Activated CD8-positive, alpha-beta T cell treated with anti-CD3 and anti-CD28 coated beads for 36 hours (primary cell): ENCODE measurements at regions of chr4 and their contacts with region 1.

Region 1: DNA sequence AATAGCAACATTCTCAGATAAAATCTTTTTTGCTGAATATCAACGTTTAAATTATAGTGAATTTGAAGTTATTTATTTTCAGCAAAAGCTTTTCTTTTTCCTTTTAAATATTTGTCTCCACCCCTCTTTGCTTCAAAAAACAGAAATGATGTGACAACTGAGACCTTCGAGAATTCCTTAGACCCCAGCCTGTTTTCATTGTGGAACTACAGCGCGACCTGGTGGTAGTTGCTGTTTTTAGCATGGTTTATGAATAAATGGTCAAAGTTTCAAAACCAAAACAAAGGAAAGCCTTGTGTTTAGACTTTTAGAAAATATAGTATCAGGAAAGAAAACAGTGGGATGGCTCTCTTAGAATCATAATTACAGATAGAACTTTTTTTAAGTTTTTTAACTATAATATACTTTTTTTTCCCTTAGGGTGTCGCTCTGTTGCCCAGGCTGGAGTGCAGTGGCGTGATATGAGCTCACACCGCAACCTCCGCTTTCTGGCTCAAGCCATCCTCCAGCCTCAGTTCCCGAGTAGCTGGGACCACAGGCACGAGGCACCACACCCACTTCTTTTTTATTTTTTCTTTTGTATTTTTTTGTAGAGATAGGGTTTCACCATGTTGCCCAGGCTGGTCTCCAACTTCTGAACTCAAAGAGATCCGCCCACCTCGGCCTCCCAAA is 26.8 kb upstream of the TMEM184C start:
- DNase-seq: peak; percentile 75
- ATAC-seq: no peak
- H3K4me3 Mint-ChIP-seq: no peak overlapping the region
- H3K27ac Mint-ChIP-seq: no peak overlapping the region
- H3K4me1 Mint-ChIP-seq: peaks cover 2% of the 10 kb centered on the region
- H3K27me3 Mint-ChIP-seq: no peaks in the 10 kb centered on the region
- CTCF ChIP-seq: peak; percentile 87

Region 2: DNA sequence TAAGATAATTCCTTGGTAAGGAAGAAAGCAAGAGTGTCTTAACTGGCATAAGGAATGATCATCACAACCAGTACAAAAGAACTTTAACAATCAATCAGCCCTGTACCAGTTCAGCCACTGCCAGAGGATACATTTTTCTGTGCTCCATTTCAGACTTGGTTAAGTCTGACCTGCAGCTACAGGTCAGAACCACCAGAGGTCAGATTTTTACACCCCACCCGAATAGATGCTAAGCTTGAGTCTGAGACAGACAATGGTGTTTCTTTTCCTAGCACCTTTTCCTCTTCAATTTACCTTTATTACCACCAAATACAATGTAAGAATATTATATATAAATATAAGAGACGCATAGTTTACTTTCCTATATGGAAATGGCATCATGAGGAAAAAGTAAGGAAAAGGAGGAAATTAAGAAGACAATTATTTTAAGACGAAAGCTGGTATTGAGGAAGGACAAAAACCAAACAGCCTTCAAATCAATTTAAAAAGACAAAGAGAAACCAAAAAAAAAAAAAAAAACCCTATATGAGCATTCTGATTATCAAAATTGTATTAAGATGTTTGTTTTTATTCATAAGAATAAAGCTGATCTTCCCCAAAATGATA is 429.4 kb before region 1 on chr4:
- CTCF ChIA-PET with region 1: interaction called, 20 read pairs
- POLR2A ChIA-PET with region 1: no interaction called
- intact Hi-C with region 1: loop called (anchors 2 kb)
- DNase-seq: peak; percentile 8
- ATAC-seq: peak; percentile 66
- H3K4me3 Mint-ChIP-seq: no peak overlapping the region
- H3K27ac Mint-ChIP-seq: no peak overlapping the region
- H3K4me1 Mint-ChIP-seq: peaks cover 2% of the 10 kb centered on the region
- H3K27me3 Mint-ChIP-seq: peaks cover 21% of the 10 kb centered on the region
- CTCF ChIP-seq: peak; percentile 68

Region 3: GRCh38 chr4:147518846-147519767 is 71.3 kb before region 1 on chr4:
- CTCF ChIA-PET with region 1: interaction called, 34 read pairs
- POLR2A ChIA-PET with region 1: no interaction called
- intact Hi-C with region 1: loop called (anchors 2 kb)
- DNase-seq: peak; percentile 74
- ATAC-seq: peak; percentile 71
- H3K4me3 Mint-ChIP-seq: no peak overlapping the region
- H3K27ac Mint-ChIP-seq: no peak overlapping the region
- H3K4me1 Mint-ChIP-seq: no peaks in the 10 kb centered on the region
- H3K27me3 Mint-ChIP-seq: peaks cover 7% of the 10 kb centered on the region
- CTCF ChIP-seq: peak; percentile 87

Region 4: DNA sequence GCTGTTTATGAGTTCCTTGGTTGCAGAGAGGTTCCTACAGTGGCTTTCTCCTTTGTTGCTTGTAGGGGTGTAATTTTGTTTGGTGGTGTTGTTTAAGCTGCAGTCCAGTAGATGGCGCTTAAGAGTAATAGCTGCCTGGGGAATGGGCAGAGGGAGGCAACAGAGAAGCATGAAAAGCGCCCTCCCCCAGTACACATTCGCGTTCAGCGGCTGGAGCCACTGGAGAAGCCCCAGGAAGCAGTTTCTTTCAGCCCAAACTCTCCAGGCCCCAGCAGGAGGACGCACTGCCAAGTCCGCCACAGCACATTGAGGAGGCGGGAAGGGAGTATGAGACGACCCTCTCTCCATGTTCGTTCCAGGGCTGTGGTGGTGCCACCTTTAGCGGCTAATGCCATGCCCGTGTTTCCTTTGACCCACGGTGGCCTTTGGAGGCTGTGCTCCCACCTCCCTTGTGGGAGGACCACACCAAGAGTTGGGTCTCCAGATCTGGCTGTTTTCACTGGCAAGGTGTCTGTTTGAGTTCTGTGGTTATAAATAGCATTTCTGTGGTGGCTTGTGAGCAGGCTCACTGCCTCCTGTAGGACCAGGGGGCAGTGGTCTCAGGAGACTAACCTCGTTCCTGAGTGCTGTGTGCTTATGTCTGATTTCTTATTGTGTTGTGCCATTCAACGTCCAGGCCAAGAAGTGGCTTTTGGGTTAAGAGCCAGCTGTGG is 393.8 kb after region 1 on chr4:
- CTCF ChIA-PET with region 1: no interaction called
- POLR2A ChIA-PET with region 1: no interaction called
- intact Hi-C with region 1: no loop called
- DNase-seq: peak; percentile 36
- ATAC-seq: peak; percentile 74
- H3K4me3 Mint-ChIP-seq: no peak overlapping the region
- H3K27ac Mint-ChIP-seq: no peak overlapping the region
- H3K4me1 Mint-ChIP-seq: peaks cover 13% of the 10 kb centered on the region
- H3K27me3 Mint-ChIP-seq: no peaks in the 10 kb centered on the region
- CTCF ChIP-seq: peak; percentile 76